PC-9 (cell line): ENCODE measurements at regions of chr20 and their contacts with region 1.

Region 1: DNA sequence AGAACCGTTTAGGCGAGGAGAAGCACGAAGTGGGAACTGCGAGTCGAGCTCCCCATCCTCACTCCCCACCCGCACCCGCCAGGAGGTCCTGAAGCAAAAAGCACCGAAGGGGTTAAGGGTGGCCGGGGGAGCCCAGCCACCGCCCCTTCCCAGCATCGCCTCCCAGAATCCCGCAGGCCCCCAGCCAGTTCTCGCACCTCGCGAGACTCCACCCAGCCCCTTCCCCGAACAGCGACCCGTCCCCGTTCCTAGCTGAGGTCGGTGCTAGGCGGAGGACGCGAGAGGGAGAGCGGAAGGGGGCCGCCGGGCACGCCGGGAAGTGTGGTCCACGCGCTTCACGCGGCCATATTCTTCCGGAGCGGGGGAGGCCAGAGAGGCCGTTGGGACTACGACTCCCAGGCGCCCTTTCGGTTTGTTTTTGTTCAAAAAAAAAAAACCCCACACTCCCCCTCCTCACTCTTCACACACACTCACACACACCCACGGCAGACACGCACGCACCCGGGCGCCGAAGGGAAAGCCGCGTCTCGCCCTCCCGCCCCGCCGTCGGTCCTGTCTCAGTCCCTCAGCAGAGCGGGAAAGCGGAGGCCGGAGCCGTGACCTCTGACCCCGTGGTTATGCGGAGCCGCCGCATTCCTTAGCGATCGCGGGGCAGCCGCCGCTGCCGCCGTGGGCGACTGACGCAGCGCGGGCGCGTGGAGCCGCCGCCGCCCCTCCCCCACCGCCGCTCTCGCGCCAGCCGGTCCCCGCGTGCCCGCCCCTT is at the start of gene ASXL1:
- DNase-seq: peak; percentile 86 to 99
- H3K4me3 ChIP-seq: peak within 1 kb of the TSS; percentile 78
- H3K27ac ChIP-seq: peak within 1 kb of the TSS; percentile 72
- H3K4me1 ChIP-seq: peaks cover 49% of the 10 kb centered on the region
- H3K27me3 ChIP-seq: no peaks in the 10 kb centered on the region
- CTCF ChIP-seq: no peak
- total RNA-seq, gene ASXL1: 102 and 123 TPM in 2 replicates

Region 2: DNA sequence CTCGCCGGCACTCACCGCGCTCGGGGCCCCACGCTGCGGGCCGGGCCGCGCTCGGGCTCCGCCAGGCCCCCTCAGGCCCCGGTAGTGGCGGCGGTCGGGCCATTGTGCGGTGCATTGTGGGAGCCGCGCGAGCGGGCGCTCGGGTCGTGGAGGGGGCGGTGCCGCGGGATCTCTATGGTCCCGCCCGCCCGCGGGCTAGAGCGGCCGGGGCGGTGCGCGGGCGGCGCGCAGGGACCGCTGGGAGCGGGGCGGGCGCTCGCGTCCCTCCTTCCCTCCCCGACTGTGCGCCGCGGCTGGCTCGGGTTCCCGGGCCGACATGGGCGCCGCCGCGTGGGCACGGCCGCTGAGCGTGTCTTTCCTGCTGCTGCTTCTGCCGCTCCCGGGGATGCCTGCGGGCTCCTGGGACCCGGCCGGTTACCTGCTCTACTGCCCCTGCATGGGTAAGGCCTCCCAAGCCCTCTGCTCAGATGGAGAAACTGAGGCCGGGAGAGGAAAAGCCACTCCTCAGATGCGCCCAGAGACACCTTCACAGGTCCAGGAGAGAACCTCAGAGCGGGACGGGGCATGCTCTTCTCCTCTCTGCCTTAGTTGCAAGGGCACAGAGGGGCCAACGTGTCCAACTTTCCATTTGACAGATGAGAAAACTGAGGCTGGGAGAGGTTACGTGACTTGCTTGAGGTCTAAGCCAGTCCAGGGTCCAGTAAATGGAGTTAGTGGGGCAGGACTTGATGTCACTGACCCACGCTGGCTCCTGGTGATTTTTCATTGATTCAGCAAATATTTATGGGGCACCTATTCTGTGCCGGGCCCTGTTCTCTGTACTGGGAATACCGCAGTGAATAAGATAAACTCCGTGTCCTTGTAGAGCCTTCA is 150.2 kb before region 1 on chr20 and contains the starts of genes PLAGL2 and POFUT1:
- CTCF ChIA-PET with region 1: no interaction called
- POLR2A ChIA-PET with region 1: no interaction called
- intact Hi-C with region 1: loop called (anchors 2 kb)
- DNase-seq: peak; percentile 56 to 94
- H3K4me3 ChIP-seq: peak within 1 kb of the TSS; percentile 95
- H3K27ac ChIP-seq: peak within 1 kb of the TSS; percentile 35; the same call in 1 of the 2 replicates
- H3K4me1 ChIP-seq: peaks cover 41% of the 10 kb centered on the region
- H3K27me3 ChIP-seq: no peaks in the 10 kb centered on the region
- CTCF ChIP-seq: no peak; the same call in 1 of the 2 replicates
- total RNA-seq, gene PLAGL2: 17.5 and 23.8 TPM in 2 replicates
- total RNA-seq, gene POFUT1: 38.1 and 51.3 TPM in 2 replicates

Region 3: GRCh38 chr20:32249030-32249738 is 108.9 kb before region 1 on chr20:
- CTCF ChIA-PET with region 1: no interaction called
- POLR2A ChIA-PET with region 1: no interaction called
- intact Hi-C with region 1: no loop called
- DNase-seq: no peak
- H3K4me3 ChIP-seq: no peak overlapping the region
- H3K27ac ChIP-seq: no peak overlapping the region
- H3K4me1 ChIP-seq: peaks cover 9% of the 10 kb centered on the region; the same call in 1 of the 2 replicates
- H3K27me3 ChIP-seq: no peaks in the 10 kb centered on the region
- CTCF ChIP-seq: no peak

Region 4: DNA sequence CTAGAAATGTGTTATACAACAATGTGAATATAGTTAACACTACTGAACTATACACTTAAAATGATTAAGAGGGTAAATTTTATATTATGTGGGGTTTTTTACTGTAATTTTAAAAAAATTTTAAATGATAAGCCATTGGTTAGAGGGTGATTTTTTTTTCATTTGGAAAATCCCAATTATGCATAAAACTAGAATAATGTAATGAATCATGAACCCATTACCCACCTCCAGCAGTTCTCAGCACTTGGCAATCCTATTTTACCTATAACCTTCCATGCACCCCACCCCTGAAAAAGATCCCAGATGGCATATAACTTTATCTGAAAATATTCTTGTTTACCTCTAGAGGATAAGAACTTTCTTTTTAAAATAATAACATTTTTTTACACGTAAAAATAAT is 66.9 kb before region 1 on chr20:
- CTCF ChIA-PET with region 1: no interaction called
- POLR2A ChIA-PET with region 1: interaction called, 10 read pairs
- intact Hi-C with region 1: no loop called
- DNase-seq: no peak
- H3K4me3 ChIP-seq: no peak overlapping the region
- H3K27ac ChIP-seq: no peak overlapping the region
- H3K4me1 ChIP-seq: no peaks in the 10 kb centered on the region
- H3K27me3 ChIP-seq: no peaks in the 10 kb centered on the region
- CTCF ChIP-seq: no peak

Region 5: GRCh38 chr20:32336918-32337347 is 21.1 kb before region 1 on chr20:
- CTCF ChIA-PET with region 1: no interaction called
- POLR2A ChIA-PET with region 1: interaction called, 5 read pairs
- intact Hi-C with region 1: loop called (anchors 2 kb)
- DNase-seq: peak in 1 of 2 experiments; percentile 37
- H3K4me3 ChIP-seq: no peak overlapping the region
- H3K27ac ChIP-seq: no peak overlapping the region
- H3K4me1 ChIP-seq: no peaks in the 10 kb centered on the region
- H3K27me3 ChIP-seq: no peaks in the 10 kb centered on the region
- CTCF ChIP-seq: peak; percentile 63

Region 6: GRCh38 chr20:32470025-32470861 is 112.2 kb after region 1 on chr20:
- CTCF ChIA-PET with region 1: no interaction called
- POLR2A ChIA-PET with region 1: no interaction called
- intact Hi-C with region 1: no loop called
- DNase-seq: no peak
- H3K4me3 ChIP-seq: no peak overlapping the region
- H3K27ac ChIP-seq: no peak overlapping the region
- H3K4me1 ChIP-seq: peaks cover 21% of the 10 kb centered on the region
- H3K27me3 ChIP-seq: no peaks in the 10 kb centered on the region
- CTCF ChIP-seq: peak; percentile 38; the same call in 1 of the 2 replicates

Region 7: DNA sequence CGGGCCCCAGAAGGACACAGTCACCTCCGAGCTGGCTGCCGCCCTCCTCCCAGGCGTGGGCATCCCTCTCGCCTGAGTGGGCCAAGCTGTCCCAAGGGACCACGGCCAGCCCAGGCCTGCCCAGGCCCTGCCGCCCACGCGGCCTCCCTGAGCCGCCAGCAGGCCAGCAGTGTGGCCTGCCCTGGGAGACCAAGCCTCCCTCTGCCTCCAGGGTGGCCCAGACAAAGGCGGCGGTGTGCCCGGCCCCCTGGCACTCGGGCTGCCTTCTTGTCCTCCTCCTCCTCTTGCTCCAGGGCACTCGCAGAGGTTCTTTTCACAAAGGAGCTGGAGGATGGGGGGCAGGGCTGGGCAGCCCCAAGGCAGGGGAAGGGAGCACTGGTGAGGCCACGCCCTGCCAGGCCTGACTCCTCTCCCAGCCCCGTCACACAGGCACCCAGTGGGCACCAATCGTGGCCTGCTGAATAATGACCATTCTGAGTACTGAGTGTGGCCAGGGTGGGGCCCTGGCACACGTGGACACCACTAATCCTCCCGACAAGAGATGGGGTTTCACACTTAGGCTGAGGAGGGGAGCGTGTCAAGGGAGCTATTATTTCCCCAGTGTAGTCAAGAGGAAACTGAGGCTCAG is 201.8 kb after region 1 on chr20:
- CTCF ChIA-PET with region 1: no interaction called
- POLR2A ChIA-PET with region 1: no interaction called
- intact Hi-C with region 1: no loop called
- DNase-seq: peak in 1 of 2 experiments; percentile 43
- H3K4me3 ChIP-seq: no peak overlapping the region
- H3K27ac ChIP-seq: no peak overlapping the region
- H3K4me1 ChIP-seq: peaks cover 24% of the 10 kb centered on the region
- H3K27me3 ChIP-seq: no peaks in the 10 kb centered on the region
- CTCF ChIP-seq: no peak

Region 8: DNA sequence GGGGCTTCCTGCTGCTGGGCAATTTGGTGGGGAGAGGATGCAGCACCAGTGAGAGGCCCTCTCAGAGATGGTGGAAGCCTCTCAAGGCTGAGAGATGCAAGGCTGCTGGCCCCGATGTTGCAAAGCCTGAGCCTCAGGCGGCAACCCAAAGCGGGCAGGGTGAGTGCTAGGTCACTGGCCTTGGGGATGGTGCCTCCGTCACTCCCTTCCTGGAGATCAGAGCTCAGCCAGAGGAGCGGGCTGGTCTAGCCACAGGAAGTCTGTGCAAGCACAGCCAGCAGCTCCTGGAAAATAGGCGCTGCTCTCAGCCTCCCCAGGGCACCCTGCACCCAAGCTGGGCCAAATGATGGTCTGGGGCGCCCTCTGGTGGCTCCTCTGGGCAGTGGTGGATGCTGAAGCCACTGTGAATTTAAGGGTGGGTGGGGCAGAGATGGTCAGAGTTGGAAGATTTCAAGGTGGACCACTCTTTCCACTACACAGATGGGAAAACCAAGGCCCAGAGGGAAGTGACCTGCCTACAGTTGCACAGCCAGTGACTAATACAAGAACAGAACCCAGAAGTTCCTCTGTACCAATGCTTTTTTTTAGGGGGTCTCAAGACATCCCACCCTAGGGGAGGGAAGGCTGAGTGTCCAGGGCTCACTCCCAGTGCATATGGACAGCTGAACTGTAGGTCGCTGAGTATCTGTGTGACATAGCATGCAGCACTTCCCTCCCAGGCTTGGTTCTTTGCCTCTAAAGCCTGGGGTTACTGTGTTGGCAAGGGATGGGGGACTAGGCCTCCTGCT is 294.9 kb after region 1 on chr20:
- CTCF ChIA-PET with region 1: no interaction called
- POLR2A ChIA-PET with region 1: no interaction called
- intact Hi-C with region 1: loop called (anchors 5 kb)
- DNase-seq: peak; percentile 89 to 92
- H3K4me3 ChIP-seq: no peak overlapping the region
- H3K27ac ChIP-seq: no peak overlapping the region
- H3K4me1 ChIP-seq: peaks cover 22% of the 10 kb centered on the region
- H3K27me3 ChIP-seq: no peaks in the 10 kb centered on the region
- CTCF ChIP-seq: peak; percentile 94

Region 9: DNA sequence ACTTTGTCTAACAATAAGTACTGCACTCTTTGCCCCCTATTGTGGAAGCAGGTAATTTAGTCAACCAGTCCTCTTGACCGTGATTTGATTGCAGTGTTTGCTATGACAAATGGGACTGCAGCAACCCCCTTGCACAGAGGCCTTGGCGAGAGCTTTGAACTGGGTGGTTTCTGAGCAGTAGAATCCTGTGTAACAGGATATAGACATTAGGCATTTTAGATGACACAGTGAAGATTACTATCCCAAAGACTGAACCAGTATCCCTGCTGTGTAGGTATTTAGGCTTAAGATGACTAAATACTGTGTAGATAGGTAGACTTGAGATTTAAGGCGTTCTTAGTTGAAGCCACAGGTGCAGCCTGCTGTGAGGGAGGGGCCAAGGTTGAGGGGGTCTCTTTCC is 414.0 kb after region 1 on chr20:
- CTCF ChIA-PET with region 1: no interaction called
- POLR2A ChIA-PET with region 1: no interaction called
- intact Hi-C with region 1: no loop called
- DNase-seq: no peak
- H3K4me3 ChIP-seq: no peak overlapping the region
- H3K27ac ChIP-seq: no peak overlapping the region
- H3K4me1 ChIP-seq: no peaks in the 10 kb centered on the region
- H3K27me3 ChIP-seq: no peaks in the 10 kb centered on the region
- CTCF ChIP-seq: no peak